CD8-positive, alpha-beta T cell (primary cell): ENCODE measurements at regions of chr7 and their contacts with region 1.

Region 1: DNA sequence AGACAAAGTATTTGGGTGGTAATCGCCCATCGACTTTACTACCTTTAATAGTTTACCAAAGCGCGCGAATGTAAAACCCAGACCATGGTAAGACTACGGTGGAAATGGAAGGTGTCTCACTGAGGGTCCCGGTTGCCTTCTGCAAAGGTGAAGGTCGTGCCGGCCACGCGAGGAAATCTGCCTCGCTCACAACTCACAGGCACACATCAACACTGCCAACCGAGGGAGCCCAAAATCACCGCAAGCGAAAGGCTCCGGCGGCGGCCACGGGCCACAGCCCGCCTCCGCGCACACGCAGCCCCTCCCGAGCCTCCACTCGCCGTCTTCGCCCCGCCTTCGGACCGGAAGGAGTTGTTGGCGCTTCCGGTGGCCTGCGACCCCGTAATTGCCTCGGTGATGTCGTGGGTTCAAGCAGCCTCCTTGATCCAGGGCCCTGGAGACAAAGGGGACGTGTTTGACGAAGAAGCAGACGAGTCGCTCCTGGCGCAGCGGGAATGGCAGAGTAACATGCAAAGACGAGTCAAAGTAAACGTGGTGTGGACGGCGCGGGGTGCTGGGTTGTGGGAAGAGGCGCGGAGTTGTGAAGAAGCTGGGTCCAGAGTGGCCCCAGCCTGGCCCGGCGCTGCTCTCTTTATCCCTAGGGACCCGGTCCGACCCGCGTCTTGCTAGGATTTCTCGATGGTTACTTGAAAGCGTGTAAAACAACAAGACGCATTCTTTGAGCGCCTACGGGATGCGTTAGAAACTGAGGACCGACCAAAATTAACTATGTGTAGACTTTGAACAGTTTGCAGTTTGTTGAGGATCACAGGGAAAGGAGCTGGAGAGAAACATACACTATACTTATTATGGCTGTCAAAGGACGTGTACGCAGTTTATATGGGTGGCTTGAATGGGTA is at the start of gene YAE1:
- DNase-seq: peak; percentile 60 to 89 (median 81)
- ATAC-seq: peak; percentile 91
- H3K4me3 ChIP-seq: peak within 1 kb of the TSS; percentile 83 to 86
- H3K4me3 Mint-ChIP-seq: peak within 1 kb of the TSS; percentile 99
- H3K27ac ChIP-seq: peak within 1 kb of the TSS; percentile 79 to 80
- H3K27ac Mint-ChIP-seq: peak within 1 kb of the TSS; percentile 99
- H3K4me1 ChIP-seq: peaks cover 9% of the 10 kb centered on the region
- H3K4me1 Mint-ChIP-seq: peaks cover 35% of the 10 kb centered on the region
- H3K27me3 ChIP-seq: no peaks in the 10 kb centered on the region
- H3K27me3 Mint-ChIP-seq: no peaks in the 10 kb centered on the region
- CTCF ChIP-seq: no peak
- total RNA-seq, gene YAE1: 5.2 to 8.8 TPM

Region 2: DNA sequence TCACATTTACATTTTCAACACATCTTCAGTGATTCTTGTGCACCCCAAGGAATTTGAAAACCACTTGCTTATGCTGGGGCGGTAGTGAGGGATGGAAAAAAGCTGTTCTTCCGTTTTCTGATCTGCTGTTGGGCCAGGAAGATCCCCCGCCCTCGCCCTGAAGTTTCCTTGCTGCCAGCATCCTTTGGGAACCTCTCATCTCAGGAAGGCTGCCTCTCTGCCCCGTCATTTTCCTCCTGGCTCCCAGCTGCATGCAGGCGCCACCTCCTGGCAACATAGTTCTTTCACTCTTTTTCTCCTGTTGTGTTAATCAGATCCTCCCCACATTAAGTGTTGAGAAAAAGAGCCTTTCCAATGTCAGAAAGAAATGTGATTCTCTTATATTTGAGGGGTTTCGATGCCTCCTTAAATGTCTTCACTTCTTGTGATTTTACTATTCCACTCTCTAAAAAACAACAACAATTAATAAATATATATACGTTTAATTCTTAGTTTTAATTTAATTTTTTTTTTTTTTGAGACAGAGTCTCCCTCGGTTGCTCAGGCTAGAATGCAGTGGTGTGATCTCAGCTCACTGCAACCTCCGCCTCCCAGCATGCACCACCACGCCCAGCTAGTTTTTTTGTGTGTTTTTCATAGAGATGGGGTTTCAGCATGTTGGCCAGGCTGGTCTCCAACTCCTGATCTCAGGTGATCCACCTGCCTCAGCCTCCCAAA is 180.0 kb after region 1 on chr7:
- CTCF ChIA-PET with region 1: interaction called, 10 read pairs
- POLR2A ChIA-PET with region 1: interaction called, 4 read pairs
- intact Hi-C with region 1: no loop called
- DNase-seq: peak in 8 of 9 experiments; percentile 30 to 75 (median 65)
- ATAC-seq: peak; percentile 65
- H3K4me3 ChIP-seq: no peak overlapping the region
- H3K4me3 Mint-ChIP-seq: peak overlapping the region; percentile 49
- H3K27ac ChIP-seq: no peak overlapping the region
- H3K27ac Mint-ChIP-seq: peak overlapping the region; percentile 75
- H3K4me1 ChIP-seq: peaks cover 4% of the 10 kb centered on the region
- H3K4me1 Mint-ChIP-seq: peaks cover 5% of the 10 kb centered on the region
- H3K27me3 ChIP-seq: no peaks in the 10 kb centered on the region
- H3K27me3 Mint-ChIP-seq: no peaks in the 10 kb centered on the region
- CTCF ChIP-seq: peak; percentile 62

Region 3: DNA sequence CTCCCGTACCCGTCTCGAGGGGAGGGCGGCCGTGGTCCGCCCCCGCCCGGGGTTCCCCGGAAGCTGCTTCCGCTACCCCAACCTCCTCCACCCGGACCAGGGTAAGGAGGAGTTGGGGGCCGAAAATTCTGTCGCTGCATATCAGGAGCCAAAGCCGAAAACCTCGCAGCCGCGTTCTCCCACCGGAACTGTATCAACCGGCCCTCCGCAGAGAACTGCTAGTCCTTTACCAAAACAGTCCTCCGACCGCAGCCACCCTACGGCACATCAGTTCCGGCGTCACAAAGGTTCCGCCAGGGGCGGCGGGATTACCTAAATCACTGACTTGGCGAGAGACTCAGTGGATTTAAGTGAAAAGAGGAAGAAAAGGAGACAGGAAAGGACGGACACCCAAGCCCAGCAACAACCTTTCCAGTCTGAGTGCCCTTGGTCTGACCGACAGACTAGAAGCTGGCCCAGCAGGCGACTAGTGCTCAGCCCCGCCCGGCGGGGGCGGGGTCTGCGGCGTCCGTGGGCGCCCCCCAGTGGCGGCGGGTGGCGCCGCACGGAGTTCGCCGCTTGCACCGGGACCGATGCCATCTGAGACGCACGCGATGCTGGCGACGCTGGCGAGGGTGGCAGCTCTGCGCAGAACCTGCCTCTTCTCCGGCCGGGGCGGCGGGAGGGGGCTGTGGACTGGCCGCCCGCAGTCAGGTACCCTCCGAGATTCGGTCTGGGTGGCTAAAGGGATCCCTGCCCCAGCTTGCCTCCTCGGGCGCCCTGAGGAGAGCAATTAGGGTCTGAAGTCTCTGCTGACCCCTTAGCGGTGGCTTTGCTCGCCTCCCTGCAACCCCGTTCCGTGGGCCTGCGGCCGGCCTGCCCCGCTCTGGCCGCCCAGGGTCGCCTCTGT is 568.4 kb after region 1 on chr7 and contains the starts of genes MPLKIP and SUGCT:
- CTCF ChIA-PET with region 1: interaction called, 3 read pairs
- POLR2A ChIA-PET with region 1: no interaction called
- intact Hi-C with region 1: loop called (anchors 1 to 5 kb)
- DNase-seq: peak; percentile 72 to 93 (median 86)
- ATAC-seq: peak; percentile 89
- H3K4me3 ChIP-seq: peak within 1 kb of the TSS; percentile 86 to 98
- H3K4me3 Mint-ChIP-seq: peak within 1 kb of the TSS; percentile 99
- H3K27ac ChIP-seq: peak within 1 kb of the TSS; percentile 85 to 87
- H3K27ac Mint-ChIP-seq: peak within 1 kb of the TSS; percentile 98
- H3K4me1 ChIP-seq: peaks cover 33% of the 10 kb centered on the region
- H3K4me1 Mint-ChIP-seq: peaks cover 41% of the 10 kb centered on the region
- H3K27me3 ChIP-seq: no peaks in the 10 kb centered on the region
- H3K27me3 Mint-ChIP-seq: no peaks in the 10 kb centered on the region
- CTCF ChIP-seq: peak; percentile 90
- total RNA-seq, gene MPLKIP: 11.2 to 13.3 TPM
- total RNA-seq, gene SUGCT: 1.7 to 3.4 TPM